Dorsolateral prefrontal cortex (tissue), 120 donors: ENCODE measurements at regions of chr13 and their contacts with region 1.

Region 1: DNA sequence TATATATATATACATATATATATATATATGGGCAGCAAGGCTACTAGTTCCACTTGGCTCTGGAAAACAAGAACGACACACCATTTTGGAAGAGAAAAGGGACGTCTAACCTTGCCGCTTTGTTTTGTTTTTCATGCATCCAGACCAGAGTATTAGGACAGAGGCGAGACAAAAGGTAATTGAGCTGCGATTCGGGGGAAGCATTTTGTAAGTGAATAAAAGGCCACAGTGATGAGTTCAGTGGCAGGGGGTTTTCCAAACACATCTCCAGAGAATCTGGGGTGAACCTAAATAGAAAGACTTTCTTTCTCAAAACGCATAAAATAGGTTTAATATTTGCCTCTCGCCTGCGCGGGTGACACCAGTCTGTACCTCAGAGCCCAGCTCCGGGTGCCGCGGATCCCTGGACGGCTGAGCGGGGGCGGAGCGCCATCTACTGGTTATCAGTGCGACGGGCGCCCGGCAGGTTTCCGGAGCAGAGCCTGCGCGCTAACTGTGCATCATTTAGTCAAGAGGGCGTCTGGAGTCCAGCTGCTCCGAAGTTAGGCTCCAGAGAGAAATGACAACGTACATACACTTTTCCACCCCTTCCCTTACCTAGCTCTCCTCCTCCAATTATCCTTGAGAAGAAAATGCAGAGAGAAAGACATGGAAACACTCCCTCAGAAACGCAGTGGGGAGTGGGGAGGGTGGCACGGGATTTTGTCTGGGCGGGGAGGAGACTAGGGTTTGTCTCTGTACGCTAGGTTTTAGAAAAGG is 262.3 kb downstream of the TBC1D4 start:
- DNase-seq: peak; percentile 70 to 93 (median 85)
- H3K4me3 ChIP-seq: peak overlapping the region in 58 of 59 donors; percentile 12 to 63 (median 44)
- H3K27ac ChIP-seq: peak overlapping the region in 2 of 59 donors; percentile 4 to 45
- H3K27me3 ChIP-seq: no peaks in the 10 kb centered on the region
- CTCF ChIP-seq: peak; percentile 69 to 98 (median 95)

Region 2: GRCh38 chr13:73754727-73755292 is 1464.8 kb before region 1 on chr13:
- intact Hi-C with region 1: loop called (anchors 5 kb)
- DNase-seq: peak in 1 of 10 donors; percentile 9
- H3K4me3 ChIP-seq: no peak overlapping the region
- H3K27ac ChIP-seq: no peak overlapping the region
- H3K27me3 ChIP-seq: no peaks in the 10 kb centered on the region
- CTCF ChIP-seq: peak; percentile 66 to 90 (median 79)

Region 3: DNA sequence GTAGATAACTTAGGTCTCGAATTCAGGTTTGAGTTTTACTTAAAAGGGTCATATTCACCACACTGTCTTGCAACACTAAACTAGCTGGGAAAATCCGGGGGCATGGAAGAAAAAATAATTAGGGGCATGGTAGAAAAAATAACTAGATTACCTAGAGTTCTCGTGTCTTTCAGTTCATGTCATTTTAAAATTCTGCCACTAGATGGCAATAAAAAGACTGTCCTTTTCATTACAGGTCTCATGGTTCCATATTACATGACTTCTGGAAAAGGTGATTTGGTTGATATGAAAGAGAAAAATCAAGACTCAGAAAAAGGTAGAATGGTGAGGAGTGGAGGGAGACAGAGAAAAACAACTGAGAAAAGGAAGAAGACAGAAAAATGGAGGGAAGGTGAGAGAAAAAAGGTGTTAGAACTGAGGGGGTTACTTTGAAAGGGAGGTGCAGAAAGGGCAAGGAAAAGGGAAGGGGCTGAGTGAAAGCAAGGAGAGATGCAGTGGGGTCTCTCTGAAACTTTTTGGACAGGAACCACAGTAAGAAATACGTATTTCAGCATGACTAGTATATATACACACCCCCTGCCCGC is 1384.4 kb before region 1 on chr13:
- intact Hi-C with region 1: loop called (anchors 2 to 5 kb)
- DNase-seq: no peak
- H3K4me3 ChIP-seq: no peak overlapping the region
- H3K27ac ChIP-seq: no peak overlapping the region
- H3K27me3 ChIP-seq: no peaks in the 10 kb centered on the region
- CTCF ChIP-seq: peak; percentile 32 to 82 (median 72)

Region 4: GRCh38 chr13:75312884-75313520 is 93.3 kb after region 1 on chr13:
- intact Hi-C with region 1: no loop called
- DNase-seq: no peak
- H3K4me3 ChIP-seq: no peak overlapping the region
- H3K27ac ChIP-seq: no peak overlapping the region
- H3K27me3 ChIP-seq: no peaks in the 10 kb centered on the region
- CTCF ChIP-seq: no peak